ENCODE measurements at regions of chr3 and their contacts with region 1.

Region 1: DNA sequence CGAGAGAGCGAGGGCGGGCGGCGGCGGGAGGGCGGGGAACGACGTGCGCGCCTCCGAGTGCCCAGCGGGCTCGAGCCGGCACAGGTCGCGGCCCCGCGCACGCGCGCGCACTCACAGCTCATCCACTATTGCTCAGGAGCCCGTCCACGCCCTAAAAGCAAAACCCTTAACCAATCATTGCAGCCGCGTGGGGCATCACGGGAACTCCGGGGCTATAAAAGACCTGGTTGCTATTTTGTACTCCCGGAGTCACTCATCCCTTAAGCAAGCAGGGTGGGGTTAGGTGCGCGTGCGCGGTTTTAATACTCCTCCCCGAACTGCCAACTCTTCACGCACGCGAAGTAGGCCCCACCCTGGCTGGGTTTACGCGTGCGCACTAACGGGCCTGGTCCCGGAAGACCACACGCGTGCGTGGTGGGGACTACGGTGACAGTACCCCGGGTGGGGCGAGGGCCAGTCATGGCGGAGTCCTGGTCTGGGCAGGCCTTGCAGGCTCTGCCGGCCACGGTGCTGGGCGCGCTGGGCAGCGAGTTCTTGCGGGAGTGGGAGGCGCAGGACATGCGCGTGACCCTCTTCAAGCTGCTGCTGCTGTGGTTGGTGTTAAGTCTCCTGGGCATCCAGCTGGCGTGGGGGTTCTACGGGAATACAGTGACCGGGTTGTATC is at the starts of genes RHOA and TCTA:
- DNase-seq: peak; percentile 98 to 100
- ATAC-seq: peak; percentile 79 to 91 (median 84)
- H3K4me3 ChIP-seq: peak within 1 kb of the TSS; percentile 77
- H3K4me3 Mint-ChIP-seq: peak within 1 kb of the TSS; percentile 91
- H3K27ac ChIP-seq: peak within 1 kb of the TSS; percentile 90
- H3K27ac Mint-ChIP-seq: peak within 1 kb of the TSS; percentile 97 to 99
- H3K4me1 ChIP-seq: peaks cover 68% of the 10 kb centered on the region
- H3K4me1 Mint-ChIP-seq: peaks cover 66 to 70% of the 10 kb centered on the region in 2 donors
- H3K27me3 ChIP-seq: no peaks in the 10 kb centered on the region
- H3K27me3 Mint-ChIP-seq: no peaks in the 10 kb centered on the region
- CTCF ChIP-seq: no peak
- total RNA-seq, gene RHOA: 342 to 372 (median 370) TPM
- total RNA-seq, gene TCTA: 35.4 to 40.7 (median 36.7) TPM

Region 2: GRCh38 chr3:48820612-48821324 is 591.3 kb before region 1 on chr3:
- intact Hi-C with region 1: no loop called
- DNase-seq: no peak
- ATAC-seq: no peak
- H3K4me3 ChIP-seq: no peak overlapping the region
- H3K4me3 Mint-ChIP-seq: no peak overlapping the region
- H3K27ac ChIP-seq: no peak overlapping the region
- H3K27ac Mint-ChIP-seq: peak overlapping the region in 1 of 2 donors; percentile 33
- H3K4me1 ChIP-seq: peaks cover 16% of the 10 kb centered on the region
- H3K4me1 Mint-ChIP-seq: peaks cover 41 to 51% of the 10 kb centered on the region in 2 donors
- H3K27me3 ChIP-seq: no peaks in the 10 kb centered on the region
- H3K27me3 Mint-ChIP-seq: no peaks in the 10 kb centered on the region
- CTCF ChIP-seq: no peak

Region 3: GRCh38 chr3:49339945-49340800 is 71.9 kb before region 1 on chr3 and contains the start of gene USP4:
- intact Hi-C with region 1: loop called (anchors 1 kb)
- DNase-seq: peak; percentile 79 to 96
- ATAC-seq: peak; percentile 88 to 98 (median 91)
- H3K4me3 ChIP-seq: peak within 1 kb of the TSS; percentile 88
- H3K4me3 Mint-ChIP-seq: peak within 1 kb of the TSS; percentile 91
- H3K27ac ChIP-seq: peak within 1 kb of the TSS; percentile 96
- H3K27ac Mint-ChIP-seq: peak within 1 kb of the TSS; percentile 97 to 100
- H3K4me1 ChIP-seq: peaks cover 51% of the 10 kb centered on the region
- H3K4me1 Mint-ChIP-seq: peaks cover 32 to 42% of the 10 kb centered on the region in 2 donors
- H3K27me3 ChIP-seq: no peaks in the 10 kb centered on the region
- H3K27me3 Mint-ChIP-seq: no peaks in the 10 kb centered on the region
- CTCF ChIP-seq: peak; percentile 49
- total RNA-seq, gene USP4: 110 to 138 (median 135) TPM

Region 4: DNA sequence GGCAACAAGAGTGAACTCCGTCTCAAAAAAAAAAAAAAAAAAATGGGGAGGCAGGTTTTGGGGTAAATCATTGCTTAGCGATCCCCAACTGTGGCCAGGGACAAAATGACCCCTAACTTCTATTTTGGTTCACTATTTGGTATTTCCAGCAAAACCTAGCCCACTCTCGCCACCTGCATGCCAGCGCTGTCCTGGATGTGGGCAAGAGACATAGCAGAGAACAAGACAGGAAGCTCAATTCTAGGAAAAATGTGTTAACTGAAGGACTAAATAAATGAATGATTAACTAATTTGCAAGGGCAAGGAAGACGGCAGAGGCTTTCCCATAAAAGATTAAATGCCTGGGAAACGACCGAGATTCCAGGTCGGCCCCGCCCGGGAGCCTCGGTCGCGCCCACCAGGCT is 16.6 kb after region 1 on chr3:
- intact Hi-C with region 1: loop called (anchors 1 kb)
- DNase-seq: no peak
- ATAC-seq: no peak
- H3K4me3 ChIP-seq: peak overlapping the region; percentile 72
- H3K4me3 Mint-ChIP-seq: peak overlapping the region; percentile 98
- H3K27ac ChIP-seq: peak overlapping the region; percentile 76
- H3K27ac Mint-ChIP-seq: peak overlapping the region; percentile 91 to 94
- H3K4me1 ChIP-seq: peaks cover 24% of the 10 kb centered on the region
- H3K4me1 Mint-ChIP-seq: peaks cover 18 to 19% of the 10 kb centered on the region in 2 donors
- H3K27me3 ChIP-seq: no peaks in the 10 kb centered on the region
- H3K27me3 Mint-ChIP-seq: no peaks in the 10 kb centered on the region
- CTCF ChIP-seq: no peak

Measured in natural killer cell (primary cell).